ENCODE measurements at regions of chr1 and their contacts with region 1.

Region 1: GRCh38 chr1:15526490-15527339 is at the start of gene DNAJC16:
- DNase-seq: peak; percentile 88 to 99 (median 95)
- ATAC-seq: peak; percentile 30
- H3K4me3 ChIP-seq: peak within 1 kb of the TSS; percentile 66
- H3K4me3 Mint-ChIP-seq: peak within 1 kb of the TSS; percentile 96
- H3K27ac ChIP-seq: peak within 1 kb of the TSS; percentile 88 to 99
- H3K27ac Mint-ChIP-seq: peak within 1 kb of the TSS; percentile 100
- H3K4me1 ChIP-seq: peaks cover 41% of the 10 kb centered on the region
- H3K4me1 Mint-ChIP-seq: peaks cover 59% of the 10 kb centered on the region
- H3K27me3 ChIP-seq: no peaks in the 10 kb centered on the region
- H3K27me3 Mint-ChIP-seq: no peaks in the 10 kb centered on the region
- CTCF ChIP-seq: no peak
- total RNA-seq, gene DNAJC16: 8.2 to 10.4 TPM

Region 2: DNA sequence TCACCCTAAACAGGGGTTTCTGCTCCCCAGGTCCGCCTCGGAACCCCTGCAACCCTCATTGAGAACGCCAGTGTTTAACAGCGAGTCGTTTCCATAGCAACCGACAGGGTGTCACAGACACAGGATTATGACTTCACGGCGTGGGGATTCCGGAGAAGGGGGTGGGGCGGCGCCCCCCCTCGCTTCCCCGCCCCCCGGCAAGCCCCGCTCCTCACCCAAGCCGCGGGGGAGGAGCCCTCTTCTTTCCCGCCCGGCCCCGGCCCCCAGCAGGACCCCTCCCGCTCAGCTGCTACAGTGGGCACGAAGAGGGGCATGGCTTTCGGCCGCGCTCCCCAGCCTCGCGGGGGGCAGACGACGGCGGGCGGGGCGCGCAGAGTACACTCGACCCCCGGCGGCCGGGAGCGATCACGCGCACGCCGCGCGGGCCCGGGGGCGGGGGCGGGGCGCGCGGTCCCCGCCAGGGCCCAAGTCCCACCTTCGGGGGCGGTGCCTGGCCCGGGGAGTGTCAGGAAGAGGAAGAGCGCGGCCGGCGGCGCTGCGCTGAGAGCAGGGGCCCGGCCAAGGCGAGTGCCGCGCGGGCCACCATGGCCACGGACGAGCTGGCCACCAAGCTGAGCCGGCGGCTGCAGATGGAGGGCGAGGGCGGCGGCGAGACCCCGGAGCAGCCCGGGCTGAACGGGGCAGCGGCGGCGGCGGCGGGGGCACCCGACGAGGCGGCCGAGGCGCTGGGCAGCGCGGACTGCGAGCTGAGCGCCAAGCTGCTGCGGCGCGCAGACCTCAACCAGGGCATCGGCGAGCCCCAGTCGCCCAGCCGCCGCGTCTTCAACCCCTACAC is 117.1 kb before region 1 on chr1 and contains the start of gene EFHD2:
- CTCF ChIA-PET with region 1: no interaction called
- POLR2A ChIA-PET with region 1: interaction called, 3 read pairs
- intact Hi-C with region 1: loop called in 1 of 2 experiments (anchors 2 kb)
- DNase-seq: peak; percentile 62 to 99 (median 85)
- ATAC-seq: peak; percentile 79
- H3K4me3 ChIP-seq: peak within 1 kb of the TSS; percentile 94
- H3K4me3 Mint-ChIP-seq: peak within 1 kb of the TSS; percentile 97
- H3K27ac ChIP-seq: peak within 1 kb of the TSS; percentile 55 to 85
- H3K27ac Mint-ChIP-seq: peak within 1 kb of the TSS; percentile 94
- H3K4me1 ChIP-seq: peaks cover 68% of the 10 kb centered on the region
- H3K4me1 Mint-ChIP-seq: peaks cover 35% of the 10 kb centered on the region
- H3K27me3 ChIP-seq: no peaks in the 10 kb centered on the region
- H3K27me3 Mint-ChIP-seq: no peaks in the 10 kb centered on the region
- CTCF ChIP-seq: no peak
- total RNA-seq, gene EFHD2: 79.1 to 80.9 TPM

Region 3: GRCh38 chr1:15603050-15603965 is 76.6 kb after region 1 on chr1:
- CTCF ChIA-PET with region 1: no interaction called
- POLR2A ChIA-PET with region 1: interaction called, 5 read pairs
- intact Hi-C with region 1: loop called in 1 of 2 experiments (anchors 5 kb)
- DNase-seq: peak; percentile 85 to 98 (median 90)
- ATAC-seq: peak; percentile 98
- H3K4me3 ChIP-seq: peak overlapping the region; percentile 95
- H3K4me3 Mint-ChIP-seq: peak overlapping the region; percentile 65
- H3K27ac ChIP-seq: peak overlapping the region; percentile 47 to 49
- H3K27ac Mint-ChIP-seq: peak overlapping the region; percentile 80
- H3K4me1 ChIP-seq: peaks cover 15% of the 10 kb centered on the region
- H3K4me1 Mint-ChIP-seq: peaks cover 13% of the 10 kb centered on the region
- H3K27me3 ChIP-seq: no peaks in the 10 kb centered on the region
- H3K27me3 Mint-ChIP-seq: no peaks in the 10 kb centered on the region
- CTCF ChIP-seq: no peak

Region 4: DNA sequence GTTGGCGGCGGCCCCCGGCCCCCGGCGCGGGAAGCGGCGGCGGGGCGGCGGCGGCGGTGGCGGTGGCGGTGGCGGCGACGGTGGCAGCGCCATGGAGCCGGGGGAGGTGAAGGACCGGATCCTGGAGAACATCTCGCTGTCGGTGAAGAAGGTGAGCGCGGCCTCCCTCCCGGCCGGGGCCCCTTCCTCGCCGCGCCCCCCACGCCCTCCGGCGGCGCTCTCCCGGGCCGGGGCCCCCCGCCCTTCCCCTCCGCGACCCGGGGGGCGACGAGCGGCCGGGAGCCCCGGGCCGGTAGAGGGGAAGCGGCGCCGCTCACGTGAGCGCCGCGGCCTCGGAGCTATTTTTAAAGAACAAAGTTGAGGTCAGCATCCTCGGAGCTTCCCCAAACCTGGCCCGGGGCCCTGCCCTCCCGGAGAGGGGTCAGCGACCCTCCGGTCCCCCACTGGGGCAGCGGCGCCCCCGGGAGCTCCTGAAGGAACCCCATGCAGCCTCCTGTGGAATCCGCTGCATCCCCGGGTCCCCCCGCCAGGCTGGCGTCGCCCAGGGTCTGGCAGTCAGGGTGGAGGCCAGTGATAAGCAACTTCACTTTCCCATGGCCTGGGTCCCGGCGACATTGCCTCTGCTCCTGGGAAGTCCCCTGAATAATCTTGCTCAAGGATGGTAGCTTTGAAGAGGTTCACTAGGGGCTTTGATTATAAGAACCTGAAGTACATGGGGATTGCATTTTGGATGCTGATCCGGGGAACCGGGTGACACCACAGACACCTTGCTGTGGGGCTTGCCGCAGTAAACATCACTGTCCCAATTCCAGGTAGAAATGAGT is 158.0 kb after region 1 on chr1:
- CTCF ChIA-PET with region 1: no interaction called
- POLR2A ChIA-PET with region 1: no interaction called
- intact Hi-C with region 1: loop called in 1 of 2 experiments (anchors 5 kb)
- DNase-seq: peak in 13 of 14 experiments; percentile 3 to 69 (median 25)
- ATAC-seq: peak; percentile 41
- H3K4me3 ChIP-seq: peak overlapping the region; percentile 90
- H3K4me3 Mint-ChIP-seq: peak overlapping the region; percentile 93
- H3K27ac ChIP-seq: peak overlapping the region; percentile 56 to 75
- H3K27ac Mint-ChIP-seq: peak overlapping the region; percentile 95
- H3K4me1 ChIP-seq: peaks cover 32% of the 10 kb centered on the region
- H3K4me1 Mint-ChIP-seq: peaks cover 28% of the 10 kb centered on the region
- H3K27me3 ChIP-seq: no peaks in the 10 kb centered on the region
- H3K27me3 Mint-ChIP-seq: no peaks in the 10 kb centered on the region
- CTCF ChIP-seq: no peak

Region 5: GRCh38 chr1:16236511-16237342 is 710.0 kb after region 1 on chr1 and contains the start of gene CPLANE2:
- CTCF ChIA-PET with region 1: no interaction called
- POLR2A ChIA-PET with region 1: no interaction called
- intact Hi-C with region 1: loop called in 1 of 2 experiments (anchors 5 kb)
- DNase-seq: peak; percentile 93 to 98 (median 95)
- ATAC-seq: peak; percentile 78
- H3K4me3 ChIP-seq: peak within 1 kb of the TSS; percentile 85
- H3K4me3 Mint-ChIP-seq: peak within 1 kb of the TSS; percentile 93
- H3K27ac ChIP-seq: peak within 1 kb of the TSS; percentile 66 to 84
- H3K27ac Mint-ChIP-seq: peak within 1 kb of the TSS; percentile 84
- H3K4me1 ChIP-seq: peaks cover 23% of the 10 kb centered on the region
- H3K4me1 Mint-ChIP-seq: peaks cover 22% of the 10 kb centered on the region
- H3K27me3 ChIP-seq: no peaks in the 10 kb centered on the region
- H3K27me3 Mint-ChIP-seq: no peaks in the 10 kb centered on the region
- CTCF ChIP-seq: peak; percentile 11
- total RNA-seq, gene CPLANE2: 5.3 to 8.4 TPM

Region 6: GRCh38 chr1:16366722-16367257 is 840.1 kb after region 1 on chr1 and contains the start of gene SZRD1:
- CTCF ChIA-PET with region 1: no interaction called
- POLR2A ChIA-PET with region 1: no interaction called
- intact Hi-C with region 1: loop called in 1 of 2 experiments (anchors 5 kb)
- DNase-seq: peak; percentile 90 to 99 (median 94)
- ATAC-seq: peak; percentile 89
- H3K4me3 ChIP-seq: peak within 1 kb of the TSS; percentile 100
- H3K4me3 Mint-ChIP-seq: peak within 1 kb of the TSS; percentile 98
- H3K27ac ChIP-seq: peak within 1 kb of the TSS; percentile 99 to 100
- H3K27ac Mint-ChIP-seq: peak within 1 kb of the TSS; percentile 99
- H3K4me1 ChIP-seq: peaks cover 38% of the 10 kb centered on the region
- H3K4me1 Mint-ChIP-seq: peaks cover 42% of the 10 kb centered on the region
- H3K27me3 ChIP-seq: no peaks in the 10 kb centered on the region
- H3K27me3 Mint-ChIP-seq: no peaks in the 10 kb centered on the region
- CTCF ChIP-seq: no peak
- total RNA-seq, gene SZRD1: 115 to 120 TPM